ENCODE measurements at regions of chrX and their contacts with region 1.

Region 1: GRCh38 chrX:44012484-44013096 is 39.4 kb upstream of the NDP start:
- DNase-seq: peak; percentile 91 to 97 (median 94)
- H3K4me3 ChIP-seq: peak overlapping the region in 1 of 3 experiments; percentile 16
- H3K4me3 Mint-ChIP-seq: peak overlapping the region in 1 of 2 donors; percentile 55
- H3K27ac ChIP-seq: peak overlapping the region in 1 of 2 donors; percentile 76
- H3K27ac Mint-ChIP-seq: peak overlapping the region; percentile 77 to 92 (median 85)
- H3K4me1 ChIP-seq: peaks cover 24 to 35% of the 10 kb centered on the region in 2 donors
- H3K4me1 Mint-ChIP-seq: peaks cover 25% of the 10 kb centered on the region
- H3K27me3 ChIP-seq: no peaks in the 10 kb centered on the region
- H3K27me3 Mint-ChIP-seq: peaks cover 0 to 17% (median 0%) of the 10 kb centered on the region in 3 donors
- CTCF ChIP-seq: no peak

Region 2: GRCh38 chrX:43969504-43970501 is 42.8 kb before region 1 on chrX:
- intact Hi-C with region 1: loop called in 1 of 2 experiments (anchors 10 kb)
- DNase-seq: no peak
- H3K4me3 ChIP-seq: no peak overlapping the region
- H3K4me3 Mint-ChIP-seq: no peak overlapping the region
- H3K27ac ChIP-seq: no peak overlapping the region
- H3K27ac Mint-ChIP-seq: no peak overlapping the region
- H3K4me1 ChIP-seq: peaks cover 0 to 9% of the 10 kb centered on the region in 2 donors
- H3K4me1 Mint-ChIP-seq: peaks cover 17% of the 10 kb centered on the region
- H3K27me3 ChIP-seq: peaks cover 22 to 47% of the 10 kb centered on the region in 2 donors
- H3K27me3 Mint-ChIP-seq: peaks cover 18 to 50% (median 33%) of the 10 kb centered on the region in 3 donors
- CTCF ChIP-seq: no peak

Region 3: GRCh38 chrX:44872817-44873414 is 860.3 kb after region 1 on chrX and contains the start of gene KDM6A:
- intact Hi-C with region 1: loop called in 1 of 2 experiments (anchors 5 kb)
- DNase-seq: peak; percentile 90 to 99 (median 96)
- H3K4me3 ChIP-seq: peak within 1 kb of the TSS; percentile 84 to 93 (median 90)
- H3K4me3 Mint-ChIP-seq: peak within 1 kb of the TSS; percentile 87 to 93
- H3K27ac ChIP-seq: peak within 1 kb of the TSS; percentile 94 to 98
- H3K27ac Mint-ChIP-seq: peak within 1 kb of the TSS; percentile 92 to 99 (median 98)
- H3K4me1 ChIP-seq: peaks cover 10 to 36% of the 10 kb centered on the region in 2 donors
- H3K4me1 Mint-ChIP-seq: peaks cover 22% of the 10 kb centered on the region
- H3K27me3 ChIP-seq: no peaks in the 10 kb centered on the region
- H3K27me3 Mint-ChIP-seq: no peaks in the 10 kb centered on the region
- CTCF ChIP-seq: no peak
- polyA plus RNA-seq, gene KDM6A: 7.6 to 35.0 (median 13.8) TPM